ENCODE measurements at regions of chr18 and their contacts with region 1.

Region 1: DNA sequence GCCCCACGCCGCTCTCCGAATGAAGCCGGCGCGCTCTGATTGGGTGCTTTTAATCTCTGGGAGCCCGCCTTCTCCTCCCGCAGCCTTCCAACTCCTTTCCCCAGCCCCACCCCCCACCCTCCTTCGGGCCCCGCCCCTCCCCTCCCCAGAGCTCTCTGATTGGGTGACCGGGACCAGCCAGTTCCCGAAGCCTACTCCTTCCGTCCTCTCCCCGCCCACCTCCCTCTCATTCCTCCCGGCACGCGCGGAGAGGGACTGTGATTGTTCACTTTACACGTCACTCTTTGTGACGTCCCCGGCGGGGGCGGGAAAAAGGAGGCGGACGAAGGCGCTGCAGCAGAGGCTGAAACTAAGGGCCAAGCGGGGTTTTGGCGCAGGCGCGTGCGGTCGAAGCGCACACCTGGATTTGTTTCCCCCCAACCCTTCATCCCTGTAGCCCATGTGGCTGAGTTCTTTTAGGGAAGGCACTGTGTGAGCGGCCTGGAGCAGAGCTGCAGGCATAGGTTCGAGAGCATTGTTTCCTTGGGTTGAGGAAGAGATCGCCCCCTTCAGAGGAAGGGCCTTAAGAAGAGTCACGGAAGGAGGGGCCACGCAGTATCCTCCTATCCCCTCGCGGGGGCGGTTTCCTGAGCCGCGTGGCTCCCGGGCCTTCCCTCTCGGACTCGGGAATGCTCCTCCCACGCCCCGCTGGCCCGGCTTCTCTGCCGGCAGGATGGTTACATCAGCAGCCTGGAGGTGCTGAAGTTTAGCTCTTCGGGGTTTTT is at the start of gene MEX3C:
- DNase-seq: peak; percentile 98
- ATAC-seq: peak; percentile 82
- H3K4me3 Mint-ChIP-seq: peak within 1 kb of the TSS; percentile 96
- H3K27ac Mint-ChIP-seq: peak within 1 kb of the TSS; percentile 97
- H3K4me1 Mint-ChIP-seq: peaks cover 33% of the 10 kb centered on the region
- H3K27me3 Mint-ChIP-seq: no peaks in the 10 kb centered on the region
- CTCF ChIP-seq: no peak
- total RNA-seq, gene MEX3C: 54.2 and 57.4 TPM in 2 replicates

Region 2: DNA sequence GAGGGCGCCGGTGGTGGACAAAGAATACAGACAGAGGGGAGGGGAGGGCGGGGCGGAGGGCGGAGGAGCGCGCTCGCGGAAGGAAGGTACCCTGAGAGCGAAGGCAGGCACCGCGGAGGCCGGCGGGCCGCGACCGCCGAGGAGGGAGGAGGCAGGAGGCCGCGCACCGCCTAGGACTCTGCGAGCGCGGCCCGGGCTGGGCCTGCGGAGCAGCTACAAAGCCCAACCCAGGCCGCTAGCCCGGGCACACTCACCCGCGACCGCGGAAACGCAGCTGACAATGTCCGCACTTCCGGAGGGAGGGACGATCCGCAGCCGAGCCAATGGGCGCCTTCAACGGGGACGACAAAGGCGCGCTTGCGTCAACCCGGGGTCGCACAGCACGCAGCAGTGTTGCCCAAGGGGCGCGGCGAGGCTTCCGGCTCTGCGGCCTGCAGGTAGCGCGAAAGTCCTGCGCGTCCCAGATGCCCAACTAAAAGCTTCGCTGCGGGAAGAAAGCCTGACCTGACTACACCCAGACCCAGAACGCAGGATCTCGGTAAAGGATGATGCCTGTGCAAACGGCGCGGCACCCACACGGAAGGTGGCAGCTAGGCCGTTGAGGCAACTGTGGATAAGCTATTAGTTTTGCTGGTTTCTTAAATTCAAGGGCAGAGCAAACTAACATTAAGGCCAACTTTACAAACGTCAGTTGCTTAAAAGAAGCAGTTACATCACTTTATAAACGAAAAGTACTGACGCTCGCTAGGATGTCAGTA is 1710.7 kb before region 1 on chr18 and contains the start of gene C18orf32:
- CTCF ChIA-PET with region 1: no interaction called
- POLR2A ChIA-PET with region 1: interaction called, 6 read pairs
- intact Hi-C with region 1: loop called (anchors 1 kb)
- DNase-seq: peak; percentile 94
- ATAC-seq: peak; percentile 92
- H3K4me3 Mint-ChIP-seq: peak within 1 kb of the TSS; percentile 94
- H3K27ac Mint-ChIP-seq: peak within 1 kb of the TSS; percentile 98
- H3K4me1 Mint-ChIP-seq: peaks cover 68% of the 10 kb centered on the region
- H3K27me3 Mint-ChIP-seq: no peaks in the 10 kb centered on the region
- CTCF ChIP-seq: no peak
- total RNA-seq, gene C18orf32: 31.6 and 32.9 TPM in 2 replicates

Region 3: GRCh38 chr18:50819728-50820378 is 378.0 kb before region 1 on chr18 and contains the start of gene MRO:
- CTCF ChIA-PET with region 1: no interaction called
- POLR2A ChIA-PET with region 1: interaction called, 7 read pairs
- intact Hi-C with region 1: loop called (anchors 5 kb)
- DNase-seq: peak; percentile 70
- ATAC-seq: peak; percentile 86
- H3K4me3 Mint-ChIP-seq: no peak within 1 kb of the TSS
- H3K27ac Mint-ChIP-seq: no peak within 1 kb of the TSS
- H3K4me1 Mint-ChIP-seq: peaks cover 28% of the 10 kb centered on the region
- H3K27me3 Mint-ChIP-seq: no peaks in the 10 kb centered on the region
- CTCF ChIP-seq: peak; percentile 90
- total RNA-seq, gene MRO: not detected in 2 replicates

Region 4: GRCh38 chr18:51029694-51030536 is 167.9 kb before region 1 on chr18 and contains the start of gene SMAD4:
- CTCF ChIA-PET with region 1: no interaction called
- POLR2A ChIA-PET with region 1: interaction called, 23 read pairs
- intact Hi-C with region 1: loop called (anchors 1 kb)
- DNase-seq: peak; percentile 98
- ATAC-seq: peak; percentile 85
- H3K4me3 Mint-ChIP-seq: peak within 1 kb of the TSS; percentile 96
- H3K27ac Mint-ChIP-seq: peak within 1 kb of the TSS; percentile 96
- H3K4me1 Mint-ChIP-seq: peaks cover 57% of the 10 kb centered on the region
- H3K27me3 Mint-ChIP-seq: no peaks in the 10 kb centered on the region
- CTCF ChIP-seq: no peak
- total RNA-seq, gene SMAD4: 83.8 and 94.9 TPM in 2 replicates

Region 5: GRCh38 chr18:51153659-51154371 is 44.0 kb before region 1 on chr18:
- CTCF ChIA-PET with region 1: interaction called, 13 read pairs
- POLR2A ChIA-PET with region 1: interaction called, 113 read pairs
- intact Hi-C with region 1: loop called (anchors 1 kb)
- DNase-seq: peak; percentile 66
- ATAC-seq: peak; percentile 76
- H3K4me3 Mint-ChIP-seq: peak overlapping the region; percentile 86
- H3K27ac Mint-ChIP-seq: peak overlapping the region; percentile 99
- H3K4me1 Mint-ChIP-seq: peaks cover 54% of the 10 kb centered on the region
- H3K27me3 Mint-ChIP-seq: no peaks in the 10 kb centered on the region
- CTCF ChIP-seq: no peak

Region 6: DNA sequence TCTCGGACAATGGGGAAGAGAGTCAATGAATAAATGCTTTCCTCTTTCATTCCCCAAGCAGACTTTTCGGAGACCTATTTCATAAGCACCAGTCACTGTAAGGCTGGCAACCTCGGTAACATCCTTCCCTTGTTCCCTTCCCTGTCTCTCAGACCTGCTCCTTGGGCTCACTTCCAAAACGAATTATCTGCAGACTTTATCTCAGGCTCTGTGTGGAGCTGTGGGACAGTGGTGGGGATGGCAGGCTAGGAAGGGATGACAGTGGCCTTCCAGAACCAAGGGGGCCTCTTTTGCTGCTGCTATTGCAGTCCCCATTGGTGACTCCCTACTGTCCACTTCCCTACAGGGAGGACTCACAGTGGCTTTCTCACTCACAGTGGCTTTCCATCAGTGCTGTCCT is 185.3 kb after region 1 on chr18:
- CTCF ChIA-PET with region 1: no interaction called
- POLR2A ChIA-PET with region 1: no interaction called
- intact Hi-C with region 1: loop called (anchors 5 kb)
- DNase-seq: no peak
- ATAC-seq: no peak
- H3K4me3 Mint-ChIP-seq: no peak overlapping the region
- H3K27ac Mint-ChIP-seq: no peak overlapping the region
- H3K4me1 Mint-ChIP-seq: no peaks in the 10 kb centered on the region
- H3K27me3 Mint-ChIP-seq: peaks cover 2% of the 10 kb centered on the region
- CTCF ChIP-seq: no peak

Measured in activated B cell treated with CpG ODN at 0.5 μM for 24 hours (primary cell).